ENCODE measurements at regions of chr1 and their contacts with region 1.

Region 1: DNA sequence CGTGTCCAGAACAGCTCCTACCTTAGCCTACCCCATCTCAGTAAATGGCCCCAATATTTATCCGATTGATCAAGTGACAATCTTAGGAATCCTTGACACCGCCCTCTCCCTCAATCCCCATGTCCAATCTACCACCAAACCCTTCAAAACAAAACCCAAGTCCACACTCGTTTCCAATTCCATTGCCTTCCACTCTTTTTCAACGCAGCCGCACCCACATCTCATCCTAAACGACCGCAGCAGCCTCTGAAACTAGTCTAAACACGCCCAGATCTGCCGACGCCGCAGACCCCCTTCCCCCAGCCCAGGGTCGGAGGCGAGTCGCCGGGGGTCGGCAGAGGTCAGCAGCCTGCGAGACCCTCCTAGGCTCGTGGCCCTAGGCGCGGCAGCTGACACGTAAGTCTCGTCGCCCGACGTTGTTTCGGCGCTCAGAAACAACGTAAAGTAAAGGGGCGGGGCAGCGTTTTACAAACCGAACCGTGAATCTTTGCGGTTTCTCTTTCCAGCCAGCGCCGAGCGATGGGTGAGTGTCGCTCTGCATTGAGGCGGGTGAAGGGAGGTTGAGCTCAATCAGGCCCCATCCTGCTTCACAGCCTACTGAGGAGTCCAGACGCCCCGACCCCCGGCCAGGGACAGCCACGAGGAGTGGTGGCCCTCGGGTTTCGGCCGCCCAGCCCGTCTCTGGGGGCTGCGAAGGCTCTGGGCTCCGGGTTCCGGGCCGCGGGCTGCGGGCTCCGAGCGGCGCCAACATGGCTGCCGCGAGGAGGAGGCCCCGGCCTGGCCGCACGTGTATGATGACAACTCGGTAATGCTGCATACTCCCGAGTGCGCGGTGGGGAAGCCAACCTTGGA is at the start of gene RPS8:
- DNase-seq: peak; percentile 77 to 92 (median 90)
- ATAC-seq: peak; percentile 91
- H3K4me3 ChIP-seq: peak within 1 kb of the TSS; percentile 99
- H3K4me3 Mint-ChIP-seq: peak within 1 kb of the TSS; percentile 88 to 99 (median 92)
- H3K27ac ChIP-seq: peak within 1 kb of the TSS; percentile 89
- H3K27ac Mint-ChIP-seq: peak within 1 kb of the TSS; percentile 91 to 98 (median 94)
- H3K4me1 ChIP-seq: peaks cover 6 to 19% of the 10 kb centered on the region in 2 donors
- H3K4me1 Mint-ChIP-seq: peaks cover 20 to 45% (median 38%) of the 10 kb centered on the region in 7 donors
- H3K27me3 ChIP-seq: no peaks in the 10 kb centered on the region
- H3K27me3 Mint-ChIP-seq: no peaks in the 10 kb centered on the region
- total RNA-seq, gene RPS8: 2,000 to 3,409 (median 3,025) TPM

Region 2: GRCh38 chr1:44631647-44632539 is 143.4 kb before region 1 on chr1:
- CTCF ChIA-PET with region 1: no interaction called
- POLR2A ChIA-PET with region 1: interaction called, 12 read pairs
- intact Hi-C with region 1: no loop called
- DNase-seq: peak; percentile 80 to 92 (median 87)
- ATAC-seq: peak; percentile 87
- H3K4me3 ChIP-seq: peak overlapping the region; percentile 70
- H3K4me3 Mint-ChIP-seq: peak overlapping the region; percentile 69 to 95 (median 90)
- H3K27ac ChIP-seq: peak overlapping the region; percentile 85
- H3K27ac Mint-ChIP-seq: peak overlapping the region; percentile 46 to 99 (median 97)
- H3K4me1 ChIP-seq: peaks cover 8 to 13% of the 10 kb centered on the region in 2 donors
- H3K4me1 Mint-ChIP-seq: peaks cover 26 to 50% (median 39%) of the 10 kb centered on the region in 7 donors
- H3K27me3 ChIP-seq: no peaks in the 10 kb centered on the region
- H3K27me3 Mint-ChIP-seq: no peaks in the 10 kb centered on the region

Region 3: DNA sequence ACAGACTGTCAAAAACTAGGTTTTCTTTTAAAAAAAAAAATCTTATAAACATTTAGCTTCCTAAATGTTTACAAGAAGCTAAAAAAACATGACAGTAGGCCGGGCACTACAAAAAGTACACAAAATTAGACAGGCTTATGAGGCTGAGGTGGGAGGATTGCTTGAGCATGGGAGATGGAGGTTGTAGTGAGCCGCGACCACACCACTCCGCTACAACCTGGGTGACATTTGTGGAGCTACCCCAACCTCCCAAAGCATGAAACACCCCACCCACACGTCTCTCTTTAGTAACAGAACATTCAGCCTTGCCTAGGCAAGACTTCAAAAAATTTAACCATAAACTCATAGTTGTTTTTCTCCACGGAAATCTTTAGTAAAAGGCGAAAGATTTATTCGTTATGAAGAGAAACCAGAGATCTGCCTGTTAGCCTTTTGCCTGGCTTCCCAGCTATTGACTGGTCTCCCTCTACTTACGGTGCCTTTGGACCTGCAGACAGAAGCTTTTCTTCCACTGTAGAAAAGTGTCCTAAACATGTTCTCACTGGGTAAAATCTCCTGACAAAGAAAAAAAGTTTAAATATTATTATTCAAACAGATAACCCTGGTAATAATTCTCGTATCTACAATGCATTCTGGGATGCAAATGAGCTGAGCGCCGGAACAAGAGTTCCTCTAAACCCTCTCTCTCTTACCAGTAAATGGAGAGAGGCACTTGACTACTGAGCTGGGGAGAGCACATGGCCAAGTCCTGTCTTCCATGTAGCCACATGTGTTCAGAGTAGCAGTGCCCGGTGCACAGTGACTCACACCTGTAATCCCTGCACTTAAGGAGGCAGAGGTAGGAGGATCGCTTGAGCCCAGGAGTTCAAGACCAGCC is 53.6 kb before region 1 on chr1:
- CTCF ChIA-PET with region 1: interaction called, 3 read pairs
- POLR2A ChIA-PET with region 1: interaction called, 47 read pairs
- intact Hi-C with region 1: no loop called
- DNase-seq: peak in 8 of 9 donors; percentile 62 to 84 (median 72)
- ATAC-seq: peak; percentile 92
- H3K4me3 ChIP-seq: peak overlapping the region; percentile 15
- H3K4me3 Mint-ChIP-seq: peak overlapping the region; percentile 53 to 87 (median 80)
- H3K27ac ChIP-seq: peak overlapping the region; percentile 64
- H3K27ac Mint-ChIP-seq: peak overlapping the region; percentile 74 to 98 (median 95)
- H3K4me1 ChIP-seq: peaks cover 26 to 73% of the 10 kb centered on the region in 2 donors
- H3K4me1 Mint-ChIP-seq: peaks cover 52 to 85% (median 74%) of the 10 kb centered on the region in 7 donors
- H3K27me3 ChIP-seq: no peaks in the 10 kb centered on the region
- H3K27me3 Mint-ChIP-seq: no peaks in the 10 kb centered on the region

Region 4: GRCh38 chr1:44760876-44761275 is 14.4 kb before region 1 on chr1:
- CTCF ChIA-PET with region 1: no interaction called
- POLR2A ChIA-PET with region 1: interaction called, 12 read pairs
- intact Hi-C with region 1: no loop called
- DNase-seq: no peak
- ATAC-seq: no peak
- H3K4me3 ChIP-seq: no peak overlapping the region
- H3K4me3 Mint-ChIP-seq: no peak overlapping the region
- H3K27ac ChIP-seq: no peak overlapping the region
- H3K27ac Mint-ChIP-seq: no peak overlapping the region
- H3K4me1 ChIP-seq: no peaks in the 10 kb centered on the region
- H3K4me1 Mint-ChIP-seq: peaks cover 0 to 9% (median 4%) of the 10 kb centered on the region in 7 donors
- H3K27me3 ChIP-seq: no peaks in the 10 kb centered on the region
- H3K27me3 Mint-ChIP-seq: no peaks in the 10 kb centered on the region

Region 5: GRCh38 chr1:44807262-44808062 is 32.2 kb after region 1 on chr1 and contains the start of gene DYNLT4:
- CTCF ChIA-PET with region 1: interaction called, 3 read pairs
- POLR2A ChIA-PET with region 1: interaction called, 39 read pairs
- intact Hi-C with region 1: no loop called
- DNase-seq: peak; percentile 78 to 96 (median 95)
- ATAC-seq: peak; percentile 68
- H3K4me3 ChIP-seq: peak within 1 kb of the TSS; percentile 48
- H3K4me3 Mint-ChIP-seq: peak within 1 kb of the TSS; percentile 63 to 90 (median 80)
- H3K27ac ChIP-seq: peak within 1 kb of the TSS; percentile 91
- H3K27ac Mint-ChIP-seq: peak within 1 kb of the TSS; percentile 98 to 100 (median 99)
- H3K4me1 ChIP-seq: peaks cover 66 to 67% of the 10 kb centered on the region in 2 donors
- H3K4me1 Mint-ChIP-seq: peaks cover 53 to 84% (median 77%) of the 10 kb centered on the region in 7 donors
- H3K27me3 ChIP-seq: no peaks in the 10 kb centered on the region
- H3K27me3 Mint-ChIP-seq: peaks cover 0 to 3% (median 0%) of the 10 kb centered on the region in 5 donors
- total RNA-seq, gene DYNLT4: 0.31 to 9.7 (median 0.87) TPM

Region 6: GRCh38 chr1:44985747-44986359 is 210.5 kb after region 1 on chr1:
- CTCF ChIA-PET with region 1: no interaction called
- POLR2A ChIA-PET with region 1: interaction called, 5 read pairs
- intact Hi-C with region 1: loop called in 1 of 2 experiments (anchors 1 kb)
- DNase-seq: no peak
- ATAC-seq: no peak
- H3K4me3 ChIP-seq: peak overlapping the region; percentile 77
- H3K4me3 Mint-ChIP-seq: peak overlapping the region; percentile 90 to 100 (median 98)
- H3K27ac ChIP-seq: peak overlapping the region; percentile 68
- H3K27ac Mint-ChIP-seq: peak overlapping the region; percentile 75 to 99 (median 92)
- H3K4me1 ChIP-seq: peaks cover 8 to 13% of the 10 kb centered on the region in 2 donors
- H3K4me1 Mint-ChIP-seq: peaks cover 7 to 39% (median 23%) of the 10 kb centered on the region in 7 donors
- H3K27me3 ChIP-seq: no peaks in the 10 kb centered on the region
- H3K27me3 Mint-ChIP-seq: no peaks in the 10 kb centered on the region